ENCODE measurements at regions of chr17 and their contacts with region 1.

Region 1: GRCh38 chr17:47949136-47949759 is 7.9 kb downstream of the PNPO start:
- DNase-seq: peak; percentile 47 to 87 (median 62)
- ATAC-seq: peak; percentile 82
- H3K4me3 ChIP-seq: peak overlapping the region; percentile 44
- H3K4me3 Mint-ChIP-seq: peak overlapping the region; percentile 63 to 90 (median 77)
- H3K27ac ChIP-seq: peak overlapping the region; percentile 55
- H3K27ac Mint-ChIP-seq: peak overlapping the region; percentile 57 to 86 (median 76)
- H3K4me1 ChIP-seq: peaks cover 22 to 40% of the 10 kb centered on the region in 2 donors
- H3K4me1 Mint-ChIP-seq: peaks cover 30 to 56% (median 49%) of the 10 kb centered on the region in 7 donors
- H3K27me3 ChIP-seq: no peaks in the 10 kb centered on the region
- H3K27me3 Mint-ChIP-seq: no peaks in the 10 kb centered on the region

Region 2: DNA sequence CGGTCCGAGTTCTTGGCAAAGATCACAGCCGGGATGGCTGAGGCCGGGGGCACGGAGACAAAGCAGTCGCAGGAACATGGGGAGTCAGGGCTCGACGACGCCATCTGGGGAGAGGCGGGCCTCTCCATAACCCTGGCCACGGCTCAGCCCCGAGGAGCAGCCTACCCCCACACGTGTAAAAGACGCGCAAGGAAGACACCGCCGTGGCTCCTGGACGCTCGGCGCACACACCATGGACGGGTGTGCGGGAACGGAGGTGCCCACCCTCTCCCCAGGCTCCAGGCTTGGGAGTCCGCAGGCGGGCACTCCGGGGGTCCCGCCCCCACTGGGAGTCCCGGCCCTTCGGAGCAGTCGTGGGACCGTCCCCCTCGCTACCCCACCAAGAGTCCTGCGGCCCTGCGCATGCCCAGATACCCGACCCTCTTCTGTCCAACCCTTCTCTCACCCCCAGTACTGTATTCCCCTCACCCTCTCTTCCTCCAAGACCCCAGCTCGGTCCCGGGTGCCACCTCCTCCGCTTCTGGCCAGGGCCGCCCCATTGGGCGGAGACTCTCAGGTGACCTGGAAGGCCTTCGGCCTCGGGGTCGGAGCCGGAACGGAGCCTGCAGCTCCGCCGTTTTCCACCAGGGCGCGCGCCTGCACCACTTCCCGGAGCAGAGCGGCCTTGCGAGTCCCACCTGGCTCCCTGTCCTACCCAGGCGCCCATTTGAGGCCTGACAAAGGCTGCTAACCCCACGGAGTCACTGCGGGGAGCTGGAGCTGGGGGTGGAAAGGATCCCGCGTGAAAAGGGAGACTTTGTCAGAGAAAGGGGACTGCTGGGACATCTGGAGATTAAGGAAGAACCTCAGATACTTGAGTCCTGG is 108.3 kb before region 1 on chr17 and contains the start of gene SCRN2:
- CTCF ChIA-PET with region 1: interaction called, 5 read pairs
- POLR2A ChIA-PET with region 1: no interaction called
- intact Hi-C with region 1: loop called in 1 of 2 experiments (anchors 2 kb)
- DNase-seq: peak; percentile 71 to 94 (median 81)
- ATAC-seq: peak; percentile 94
- H3K4me3 ChIP-seq: peak within 1 kb of the TSS; percentile 95
- H3K4me3 Mint-ChIP-seq: peak within 1 kb of the TSS; percentile 84 to 99 (median 94)
- H3K27ac ChIP-seq: peak within 1 kb of the TSS; percentile 75
- H3K27ac Mint-ChIP-seq: peak within 1 kb of the TSS; percentile 55 to 93 (median 86)
- H3K4me1 ChIP-seq: peaks cover 19 to 21% of the 10 kb centered on the region in 2 donors
- H3K4me1 Mint-ChIP-seq: peaks cover 9 to 49% (median 38%) of the 10 kb centered on the region in 7 donors
- H3K27me3 ChIP-seq: peaks cover 0 to 7% of the 10 kb centered on the region in 2 donors
- H3K27me3 Mint-ChIP-seq: peaks cover 6 to 23% (median 18%) of the 10 kb centered on the region in 5 donors
- total RNA-seq, gene SCRN2: 33.4 to 55.9 (median 41.4) TPM

Region 3: GRCh38 chr17:47918006-47918405 is 31.2 kb before region 1 on chr17:
- CTCF ChIA-PET with region 1: interaction called, 11 read pairs
- POLR2A ChIA-PET with region 1: no interaction called
- intact Hi-C with region 1: no loop called
- DNase-seq: no peak
- ATAC-seq: no peak
- H3K4me3 ChIP-seq: no peak overlapping the region
- H3K4me3 Mint-ChIP-seq: no peak overlapping the region
- H3K27ac ChIP-seq: no peak overlapping the region
- H3K27ac Mint-ChIP-seq: peak overlapping the region in 7 of 9 donors; percentile 7 to 64 (median 53)
- H3K4me1 ChIP-seq: no peaks in the 10 kb centered on the region
- H3K4me1 Mint-ChIP-seq: peaks cover 5 to 26% (median 19%) of the 10 kb centered on the region in 7 donors
- H3K27me3 ChIP-seq: no peaks in the 10 kb centered on the region
- H3K27me3 Mint-ChIP-seq: no peaks in the 10 kb centered on the region

Region 4: GRCh38 chr17:47970704-47971463 is 21.6 kb after region 1 on chr17 and contains the start of gene CDK5RAP3:
- CTCF ChIA-PET with region 1: interaction called, 126 read pairs
- POLR2A ChIA-PET with region 1: interaction called, 26 read pairs
- intact Hi-C with region 1: loop called (anchors 1 kb)
- DNase-seq: peak; percentile 93 to 99 (median 97)
- ATAC-seq: peak; percentile 100
- H3K4me3 ChIP-seq: peak within 1 kb of the TSS; percentile 96
- H3K4me3 Mint-ChIP-seq: peak within 1 kb of the TSS; percentile 95 to 100 (median 99)
- H3K27ac ChIP-seq: peak within 1 kb of the TSS; percentile 71
- H3K27ac Mint-ChIP-seq: peak within 1 kb of the TSS; percentile 83 to 96 (median 93)
- H3K4me1 ChIP-seq: peaks cover 6 to 12% of the 10 kb centered on the region in 2 donors
- H3K4me1 Mint-ChIP-seq: peaks cover 14 to 41% (median 26%) of the 10 kb centered on the region in 7 donors
- H3K27me3 ChIP-seq: no peaks in the 10 kb centered on the region
- H3K27me3 Mint-ChIP-seq: no peaks in the 10 kb centered on the region
- total RNA-seq, gene CDK5RAP3: 238 to 349 (median 276) TPM

Region 5: DNA sequence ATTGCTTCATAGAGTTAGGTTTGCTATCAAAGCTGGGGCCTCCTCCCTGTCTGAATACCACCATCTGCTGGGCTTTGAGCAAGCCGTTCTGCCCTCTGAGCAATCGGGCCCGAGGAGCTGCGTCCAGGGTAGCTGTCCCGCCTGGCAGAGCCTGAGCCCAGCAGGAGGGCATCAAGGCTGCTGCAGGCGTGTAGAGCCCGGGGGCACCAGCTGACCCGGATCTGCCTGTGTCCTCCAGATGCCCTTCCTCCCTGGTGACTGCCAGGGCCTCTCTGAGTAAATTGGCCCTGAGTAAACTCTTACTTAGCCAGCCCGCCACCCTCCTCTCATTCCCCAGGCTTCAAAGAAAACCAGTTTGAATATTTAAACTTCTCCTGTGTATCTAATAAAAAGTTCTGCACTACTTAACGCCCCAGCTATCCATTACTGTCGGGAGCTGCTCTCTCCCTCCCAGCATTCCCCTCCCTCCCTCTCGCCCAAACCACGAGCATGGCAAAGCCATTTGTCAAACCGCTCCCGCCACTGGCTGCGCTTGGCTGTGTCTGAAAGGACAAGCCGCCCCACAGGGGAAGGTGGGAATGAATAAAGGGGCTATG is 38.1 kb after region 1 on chr17:
- CTCF ChIA-PET with region 1: interaction called, 10 read pairs
- POLR2A ChIA-PET with region 1: no interaction called
- intact Hi-C with region 1: no loop called
- DNase-seq: no peak
- ATAC-seq: no peak
- H3K4me3 ChIP-seq: no peak overlapping the region
- H3K4me3 Mint-ChIP-seq: no peak overlapping the region
- H3K27ac ChIP-seq: no peak overlapping the region
- H3K27ac Mint-ChIP-seq: no peak overlapping the region
- H3K4me1 ChIP-seq: no peaks in the 10 kb centered on the region
- H3K4me1 Mint-ChIP-seq: peaks cover 0 to 14% (median 0%) of the 10 kb centered on the region in 7 donors
- H3K27me3 ChIP-seq: no peaks in the 10 kb centered on the region
- H3K27me3 Mint-ChIP-seq: peaks cover 0 to 2% (median 0%) of the 10 kb centered on the region in 5 donors

Region 6: GRCh38 chr17:48738803-48739526 is 789.7 kb after region 1 on chr17:
- CTCF ChIA-PET with region 1: no interaction called
- POLR2A ChIA-PET with region 1: no interaction called
- intact Hi-C with region 1: no loop called
- DNase-seq: no peak
- ATAC-seq: no peak
- H3K4me3 ChIP-seq: no peak overlapping the region
- H3K4me3 Mint-ChIP-seq: peak overlapping the region in 8 of 10 donors; percentile 10 to 73 (median 58)
- H3K27ac ChIP-seq: no peak overlapping the region
- H3K27ac Mint-ChIP-seq: no peak overlapping the region
- H3K4me1 ChIP-seq: peaks cover 0 to 8% of the 10 kb centered on the region in 2 donors
- H3K4me1 Mint-ChIP-seq: peaks cover 2 to 13% (median 8%) of the 10 kb centered on the region in 7 donors
- H3K27me3 ChIP-seq: peaks cover 20 to 35% of the 10 kb centered on the region in 2 donors
- H3K27me3 Mint-ChIP-seq: peaks cover 88 to 99% (median 91%) of the 10 kb centered on the region in 5 donors

Measured in naive thymus-derived CD4-positive, alpha-beta T cell (primary cell).